Ovary (tissue), 10 donors: ENCODE measurements at regions of chr3 and their contacts with region 1.

Region 1: DNA sequence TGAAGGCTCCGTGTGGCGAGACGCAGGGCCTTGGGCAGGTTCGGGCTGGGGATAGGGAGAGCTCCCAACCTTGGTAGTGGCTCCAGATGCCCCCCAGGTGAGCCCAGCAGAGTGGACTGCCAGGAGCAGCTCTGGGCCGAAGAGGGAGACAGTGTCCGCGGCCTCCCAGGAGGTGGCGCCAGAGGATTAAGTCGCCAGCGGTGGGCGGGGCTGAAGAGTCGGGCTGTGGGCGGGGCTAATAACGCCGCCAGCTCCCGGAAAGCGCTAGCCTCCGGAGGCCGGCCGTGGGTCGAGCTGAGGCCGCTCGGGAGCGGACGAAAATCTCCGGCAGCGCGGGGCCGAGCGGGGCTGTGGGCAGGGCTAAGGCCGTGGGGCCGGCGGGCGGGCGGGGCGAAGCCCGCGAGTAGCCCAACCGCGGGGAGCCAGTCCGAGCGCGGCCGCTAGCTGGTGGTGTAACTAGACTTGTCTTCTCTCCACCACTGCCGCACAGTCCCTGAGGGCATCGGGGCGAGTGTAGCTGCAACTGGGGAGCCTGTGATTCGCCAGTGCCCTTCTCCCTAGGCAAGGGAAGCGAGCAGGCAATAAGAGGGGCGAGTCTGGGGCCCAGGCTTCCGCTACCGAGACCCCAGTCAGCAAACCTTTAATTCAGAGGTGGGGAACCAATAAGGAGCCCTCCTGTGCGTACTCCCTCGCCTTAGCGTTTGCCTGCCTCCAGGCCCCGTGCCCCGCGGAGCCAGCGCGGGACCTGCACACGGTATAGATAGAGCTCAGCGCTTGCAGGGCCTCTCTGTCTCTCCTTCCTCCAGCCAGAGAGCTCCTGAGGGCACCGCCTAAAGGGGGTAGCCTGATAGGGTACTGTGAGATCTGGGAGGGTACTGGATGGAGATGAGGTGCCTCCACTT is 14.4 kb upstream of the BSN start:
- DNase-seq: peak; percentile 93 to 97 (median 96)
- H3K4me3 ChIP-seq: peak overlapping the region; percentile 44
- H3K27ac ChIP-seq: peak overlapping the region; percentile 69 to 80
- H3K4me1 ChIP-seq: peaks cover 19% of the 10 kb centered on the region
- H3K27me3 ChIP-seq: no peaks in the 10 kb centered on the region
- CTCF ChIP-seq: peak; percentile 92 to 95 (median 94)
- EP300 ChIP-seq: no peak
- POLR2A ChIP-seq: peak; percentile 44

Region 2: DNA sequence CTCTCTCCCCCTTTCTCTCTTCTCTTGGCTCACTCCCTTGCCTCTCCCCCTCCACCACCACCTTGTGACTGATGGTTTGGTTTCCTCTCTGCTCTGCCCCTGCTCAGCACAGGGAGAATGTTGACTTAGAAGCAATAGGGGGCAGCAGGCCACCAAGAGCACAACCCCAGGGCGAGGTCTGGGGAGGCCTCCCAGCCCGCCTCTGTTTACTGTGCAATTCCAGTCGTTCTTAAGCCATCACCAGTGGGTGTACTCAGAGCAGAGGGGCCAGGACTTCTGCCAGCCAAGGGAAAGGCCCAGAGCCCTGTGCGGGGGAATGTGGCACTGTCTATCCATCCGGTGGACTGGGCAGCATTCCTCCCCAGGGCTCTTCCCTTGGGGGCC is 128.5 kb after region 1 on chr3:
- intact Hi-C with region 1: loop called in 3 of 4 experiments (anchors 5 kb)
- DNase-seq: no peak
- H3K4me3 ChIP-seq: no peak overlapping the region
- H3K27ac ChIP-seq: no peak overlapping the region
- H3K4me1 ChIP-seq: peaks cover 4% of the 10 kb centered on the region
- H3K27me3 ChIP-seq: no peaks in the 10 kb centered on the region
- CTCF ChIP-seq: no peak
- EP300 ChIP-seq: no peak
- POLR2A ChIP-seq: no peak

Region 3: GRCh38 chr3:49673715-49674496 is 134.0 kb after region 1 on chr3 and contains the start of gene APEH:
- intact Hi-C with region 1: loop called in 3 of 4 experiments (anchors 5 kb)
- DNase-seq: peak; percentile 94 to 95 (median 95)
- H3K4me3 ChIP-seq: peak within 1 kb of the TSS; percentile 89
- H3K27ac ChIP-seq: peak within 1 kb of the TSS; percentile 14 to 82
- H3K4me1 ChIP-seq: peaks cover 10% of the 10 kb centered on the region
- H3K27me3 ChIP-seq: no peaks in the 10 kb centered on the region
- CTCF ChIP-seq: peak in 1 of 3 donors; percentile 8
- EP300 ChIP-seq: no peak
- POLR2A ChIP-seq: peak; percentile 58
- total RNA-seq, gene APEH: 33.7 to 90.9 (median 65.1) TPM

Region 4: DNA sequence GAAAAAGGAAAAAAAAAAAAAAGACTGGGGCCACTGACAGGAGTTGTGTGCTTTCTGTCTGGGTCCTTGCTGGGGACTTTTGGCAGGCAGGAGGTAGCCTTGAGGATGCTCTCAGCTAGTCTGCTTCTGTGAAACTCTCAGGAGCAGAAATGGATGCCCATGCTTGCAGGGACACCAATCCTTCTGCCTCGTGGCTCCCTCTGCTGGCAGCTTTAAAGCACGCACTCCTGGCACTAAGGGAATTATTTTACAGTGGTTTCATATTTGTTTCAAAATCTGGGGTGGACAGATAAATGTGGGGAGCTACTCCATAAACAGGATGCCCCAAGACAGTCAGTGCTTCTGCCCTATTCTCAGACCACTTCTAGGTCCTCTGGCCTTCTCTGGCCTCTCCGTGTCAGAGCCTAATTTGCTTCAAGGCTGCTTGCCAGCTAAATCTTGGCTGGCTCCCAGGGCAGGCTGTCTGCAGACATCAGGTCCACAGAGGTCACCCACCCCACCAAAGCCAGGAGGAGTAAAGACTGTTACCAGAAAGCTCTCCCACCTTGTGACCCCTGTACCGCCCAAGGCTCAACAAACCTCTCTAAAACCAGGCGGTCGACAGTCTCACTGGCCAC is 299.4 kb after region 1 on chr3:
- intact Hi-C with region 1: loop called in 1 of 4 experiments (anchors 5 kb)
- DNase-seq: peak; percentile 80 to 88 (median 85)
- H3K4me3 ChIP-seq: no peak overlapping the region
- H3K27ac ChIP-seq: no peak overlapping the region
- H3K4me1 ChIP-seq: peaks cover 4% of the 10 kb centered on the region
- H3K27me3 ChIP-seq: no peaks in the 10 kb centered on the region
- CTCF ChIP-seq: peak; percentile 85 to 92 (median 91)
- EP300 ChIP-seq: no peak
- POLR2A ChIP-seq: no peak